ENCODE measurements at regions of chr4 and their contacts with region 1.

Region 1: GRCh38 chr4:98963538-98964433 is 31.7 kb upstream of the METAP1 start:
- DNase-seq: no peak
- H3K4me3 ChIP-seq: no peak overlapping the region
- H3K27ac ChIP-seq: no peak overlapping the region
- H3K4me1 ChIP-seq: no peaks in the 10 kb centered on the region
- H3K27me3 ChIP-seq: no peaks in the 10 kb centered on the region
- CTCF ChIP-seq: no peak
- EP300 ChIP-seq: no peak
- POLR2A ChIP-seq: no peak

Region 2: DNA sequence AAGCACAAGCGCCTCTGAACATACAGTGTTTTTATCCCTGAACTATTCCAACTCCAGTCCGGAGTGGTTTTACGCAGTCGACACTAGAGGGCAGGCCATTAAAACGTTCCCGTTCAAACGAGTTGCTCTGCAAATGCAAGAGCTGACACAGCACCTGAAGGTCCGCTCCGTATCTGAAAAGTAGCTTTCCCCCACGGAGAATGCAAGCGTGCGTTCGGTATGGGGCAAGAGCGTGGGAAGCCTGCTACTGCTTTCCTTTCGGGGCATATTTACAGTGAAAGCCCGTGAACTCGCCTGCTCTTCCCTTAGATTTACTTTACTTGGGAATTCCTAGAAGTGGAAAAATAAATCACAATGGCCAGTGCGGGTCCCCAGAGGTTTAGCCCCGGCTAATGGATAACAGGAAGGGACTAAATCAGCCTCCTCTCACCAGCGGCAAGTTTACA is 496.1 kb before region 1 on chr4:
- in situ Hi-C with region 1: loop called in 1 of 4 experiments (anchors 25 kb)
- intact Hi-C with region 1: no loop called
- DNase-seq: peak; percentile 81
- H3K4me3 ChIP-seq: peak overlapping the region in 3 of 4 donors; percentile 5 to 43 (median 28)
- H3K27ac ChIP-seq: no peak overlapping the region
- H3K4me1 ChIP-seq: peaks cover 0 to 10% (median 4%) of the 10 kb centered on the region in 4 donors
- H3K27me3 ChIP-seq: no peaks in the 10 kb centered on the region
- CTCF ChIP-seq: peak; percentile 69 to 81 (median 75)
- EP300 ChIP-seq: no peak
- POLR2A ChIP-seq: no peak

Region 3: GRCh38 chr4:99043346-99043745 is 79.6 kb after region 1 on chr4:
- in situ Hi-C with region 1: no loop called
- intact Hi-C with region 1: no loop called
- DNase-seq: no peak
- H3K4me3 ChIP-seq: no peak overlapping the region
- H3K27ac ChIP-seq: no peak overlapping the region
- H3K4me1 ChIP-seq: no peaks in the 10 kb centered on the region
- H3K27me3 ChIP-seq: no peaks in the 10 kb centered on the region
- CTCF ChIP-seq: no peak
- EP300 ChIP-seq: no peak
- POLR2A ChIP-seq: no peak

Measured in transverse colon (tissue), 4 donors.